ENCODE measurements at regions of chr7 and their contacts with region 1.

Region 1: GRCh38 chr7:100101016-100101862 is at the starts of genes AP4M1 and MCM7:
- DNase-seq: peak; percentile 100
- total RNA-seq, gene AP4M1: 13.7 TPM
- total RNA-seq, gene MCM7: 20.5 TPM

Region 2: DNA sequence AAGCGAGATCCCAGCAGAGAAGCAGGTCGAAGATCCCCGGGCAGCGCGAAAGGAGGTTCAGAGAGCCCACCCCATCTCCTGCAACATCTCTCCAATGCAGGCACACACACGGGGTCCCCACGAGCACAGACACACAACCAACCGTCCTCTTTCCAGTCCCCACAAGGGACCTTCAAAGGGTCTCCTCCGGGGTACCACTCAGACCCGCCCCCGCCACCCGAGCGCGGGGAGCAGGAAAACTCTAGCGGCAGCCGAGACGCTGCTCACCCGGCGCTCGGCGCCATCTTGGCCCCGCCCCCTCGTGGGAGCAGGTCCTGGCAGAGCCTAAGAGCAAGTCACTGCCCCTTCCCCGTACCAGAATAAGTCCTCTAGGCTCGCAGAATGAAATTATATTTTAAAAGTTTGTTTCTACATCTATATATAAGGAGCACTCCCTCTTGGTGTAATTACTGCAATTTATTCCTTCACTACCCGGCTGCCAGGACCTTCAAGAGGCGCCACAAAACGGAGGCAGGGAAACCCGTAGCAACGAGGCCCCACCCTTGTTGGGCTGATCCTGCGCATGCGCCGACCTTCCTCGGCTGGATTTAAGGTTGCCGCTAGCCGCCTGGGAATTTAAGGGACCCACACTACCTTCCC is 17.9 kb after region 1 on chr7 and contains the starts of genes CNPY4 and TAF6:
- intact Hi-C with region 1: loop called (anchors 1 kb)
- DNase-seq: peak; percentile 98
- total RNA-seq, gene CNPY4: 9.7 TPM
- total RNA-seq, gene TAF6: 26.6 TPM